ENCODE measurements at regions of chr4 and their contacts with region 1.

Region 1: GRCh38 chr4:102620697-102621497 is 119.7 kb downstream of the NFKB1 start:
- DNase-seq: peak; percentile 43
- CTCF ChIP-seq: peak; percentile 42

Region 2: DNA sequence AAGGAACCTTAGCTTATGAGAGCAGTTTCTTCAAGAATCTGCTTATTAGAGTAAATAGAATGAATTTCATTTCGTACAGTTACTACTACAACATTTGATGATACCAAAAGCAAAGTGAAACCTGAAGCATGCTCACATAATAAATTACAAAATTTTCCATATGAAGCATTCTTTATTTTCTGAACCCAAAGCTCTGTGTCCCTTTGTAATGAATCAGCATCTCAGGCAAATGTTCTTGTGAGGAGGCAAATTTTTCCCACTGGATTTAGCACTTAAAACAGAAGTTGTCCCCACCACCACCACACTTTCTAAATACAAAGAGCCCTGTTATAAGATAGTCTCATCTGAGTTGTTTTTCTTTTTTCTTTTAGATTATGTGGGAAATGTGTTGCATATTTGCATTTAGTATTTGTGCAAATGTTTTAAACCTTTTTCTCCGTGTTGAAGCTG is 190.4 kb before region 1 on chr4:
- CTCF ChIA-PET with region 1: interaction called, 10 read pairs
- POLR2A ChIA-PET with region 1: no interaction called
- DNase-seq: no peak
- CTCF ChIP-seq: no peak

Region 3: DNA sequence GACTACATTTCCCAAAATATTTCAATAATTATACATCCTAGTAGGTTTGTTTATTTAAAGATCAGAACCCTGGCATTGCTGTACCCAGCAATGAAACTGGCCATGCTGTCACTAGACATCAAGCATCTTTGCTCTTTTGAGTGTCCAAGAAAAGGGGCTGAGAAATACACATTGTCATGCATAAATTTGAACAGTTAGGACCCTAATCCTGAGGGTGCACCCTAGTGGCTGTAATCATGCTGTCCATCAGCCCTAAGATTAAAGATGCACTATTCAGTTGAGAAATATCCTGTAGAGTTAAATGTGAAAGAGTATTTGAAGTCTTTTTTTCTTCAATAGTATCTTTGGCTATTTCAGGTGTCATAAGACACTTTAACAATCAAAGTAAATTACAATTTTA is 10.9 kb before region 1 on chr4:
- CTCF ChIA-PET with region 1: interaction called, 24 read pairs
- POLR2A ChIA-PET with region 1: no interaction called
- DNase-seq: no peak
- CTCF ChIP-seq: peak; percentile 40

Region 4: GRCh38 chr4:102632241-102633065 is 11.6 kb after region 1 on chr4:
- CTCF ChIA-PET with region 1: interaction called, 13 read pairs
- POLR2A ChIA-PET with region 1: no interaction called
- DNase-seq: no peak
- CTCF ChIP-seq: no peak

Region 5: DNA sequence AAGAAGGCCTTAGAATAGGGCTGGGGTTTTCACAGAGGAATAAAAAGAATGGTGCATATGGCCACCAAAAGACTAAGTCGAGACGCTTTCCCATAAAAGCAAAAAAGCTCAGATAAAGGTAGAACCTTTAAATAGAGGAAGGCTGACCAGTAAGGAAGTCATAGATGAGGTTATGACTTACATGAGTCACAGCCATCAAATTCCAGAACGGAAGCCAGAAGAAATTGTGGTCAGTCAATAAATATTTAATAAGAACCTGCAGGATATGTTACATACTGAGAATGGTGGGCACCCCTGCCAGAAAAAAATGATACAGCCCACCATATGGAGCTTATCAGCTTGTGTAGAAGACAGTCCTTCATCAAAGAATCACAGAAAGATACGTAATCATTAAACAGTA is 19.8 kb after region 1 on chr4:
- CTCF ChIA-PET with region 1: interaction called, 10 read pairs
- POLR2A ChIA-PET with region 1: no interaction called
- DNase-seq: no peak
- CTCF ChIP-seq: no peak

Region 6: GRCh38 chr4:103046416-103047290 is 425.8 kb after region 1 on chr4:
- CTCF ChIA-PET with region 1: no interaction called
- POLR2A ChIA-PET with region 1: no interaction called
- DNase-seq: peak; percentile 45
- CTCF ChIP-seq: peak; percentile 79

Measured in GM10248 (cell line).